Panc1 (cell line): ENCODE measurements at regions of chr10 and their contacts with region 1.

Region 1: DNA sequence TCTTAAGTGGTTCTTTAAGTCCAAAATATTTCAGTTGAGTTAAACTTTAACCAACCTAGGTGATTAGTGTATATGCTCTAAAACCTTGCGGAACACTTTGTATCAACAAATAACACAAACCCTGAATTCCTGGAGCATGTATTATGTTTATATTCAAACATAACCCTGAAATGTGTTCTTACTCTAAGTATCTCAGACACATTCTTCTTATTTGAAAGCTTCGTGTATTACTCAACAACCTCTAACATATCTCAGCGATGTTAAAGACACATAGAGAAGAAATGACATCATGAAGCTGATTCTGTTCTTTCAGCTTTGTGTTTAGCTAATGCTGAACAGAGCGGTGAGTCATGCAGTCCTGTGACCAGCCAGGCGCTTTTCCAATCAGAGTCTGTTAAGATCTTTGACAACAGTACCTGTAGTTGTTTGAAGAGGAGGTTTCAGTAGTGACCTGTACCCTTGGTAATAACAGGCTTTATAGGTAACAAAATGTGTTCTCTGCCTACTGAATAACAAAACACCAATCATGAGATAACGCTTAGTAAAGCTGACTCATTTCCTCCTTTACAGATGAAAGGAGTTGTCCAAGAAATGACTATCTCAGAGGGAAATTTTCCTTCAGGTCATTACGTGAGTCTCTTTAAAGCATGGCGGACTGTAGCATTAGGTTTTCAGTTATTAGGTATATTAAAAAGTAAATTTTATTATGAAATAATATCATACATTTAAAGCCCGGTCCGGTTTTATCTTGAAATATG is 67.3 kb upstream of the KLF6 start:
- DNase-seq: peak; percentile 97
- ATAC-seq: peak; percentile 92
- H3K4me3 ChIP-seq: no peak overlapping the region
- H3K27ac ChIP-seq: peak overlapping the region; percentile 100
- H3K4me1 ChIP-seq: peaks cover 39% of the 10 kb centered on the region
- H3K27me3 ChIP-seq: no peaks in the 10 kb centered on the region
- CTCF ChIP-seq: no peak

Region 2: GRCh38 chr10:3835770-3836169 is 16.6 kb before region 1 on chr10:
- CTCF ChIA-PET with region 1: no interaction called
- POLR2A ChIA-PET with region 1: interaction called, 15 read pairs
- in situ Hi-C with region 1: no loop called
- intact Hi-C with region 1: no loop called
- DNase-seq: no peak
- ATAC-seq: peak; percentile 69
- H3K4me3 ChIP-seq: no peak overlapping the region
- H3K27ac ChIP-seq: peak overlapping the region; percentile 99
- H3K4me1 ChIP-seq: peaks cover 50% of the 10 kb centered on the region
- H3K27me3 ChIP-seq: no peaks in the 10 kb centered on the region
- CTCF ChIP-seq: no peak

Region 3: GRCh38 chr10:3887885-3888476 is 35.7 kb after region 1 on chr10:
- CTCF ChIA-PET with region 1: no interaction called
- POLR2A ChIA-PET with region 1: interaction called, 6 read pairs
- in situ Hi-C with region 1: no loop called
- intact Hi-C with region 1: loop called (anchors 5 kb)
- DNase-seq: no peak
- ATAC-seq: peak; percentile 68
- H3K4me3 ChIP-seq: no peak overlapping the region
- H3K27ac ChIP-seq: peak overlapping the region; percentile 100
- H3K4me1 ChIP-seq: peaks cover 55% of the 10 kb centered on the region
- H3K27me3 ChIP-seq: no peaks in the 10 kb centered on the region
- CTCF ChIP-seq: no peak